Activated naive CD4-positive, alpha-beta T cell treated with anti-CD3 and anti-CD28 coated beads, Interleukin-2, amount 10 ng/mL, durations not matched to agents 7 days and 5 days (primary cell): ENCODE measurements at regions of chr9 and their contacts with region 1.

Region 1: GRCh38 chr9:69056191-69056815 is 20.8 kb downstream of the FXN start:
- DNase-seq: no peak
- H3K4me3 Mint-ChIP-seq: no peak overlapping the region
- H3K27ac Mint-ChIP-seq: no peak overlapping the region
- H3K4me1 Mint-ChIP-seq: peaks cover 19% of the 10 kb centered on the region
- H3K27me3 Mint-ChIP-seq: no peaks in the 10 kb centered on the region

Region 2: GRCh38 chr9:69044240-69045219 is 11.8 kb before region 1 on chr9:
- CTCF ChIA-PET with region 1: interaction called, 15 read pairs
- DNase-seq: peak; percentile 25
- H3K4me3 Mint-ChIP-seq: no peak overlapping the region
- H3K27ac Mint-ChIP-seq: peak overlapping the region; percentile 66
- H3K4me1 Mint-ChIP-seq: peaks cover 22% of the 10 kb centered on the region
- H3K27me3 Mint-ChIP-seq: no peaks in the 10 kb centered on the region

Region 3: GRCh38 chr9:69078581-69078980 is 22.3 kb after region 1 on chr9:
- CTCF ChIA-PET with region 1: no interaction called
- DNase-seq: no peak
- H3K4me3 Mint-ChIP-seq: no peak overlapping the region
- H3K27ac Mint-ChIP-seq: no peak overlapping the region
- H3K4me1 Mint-ChIP-seq: no peaks in the 10 kb centered on the region
- H3K27me3 Mint-ChIP-seq: no peaks in the 10 kb centered on the region

Region 4: DNA sequence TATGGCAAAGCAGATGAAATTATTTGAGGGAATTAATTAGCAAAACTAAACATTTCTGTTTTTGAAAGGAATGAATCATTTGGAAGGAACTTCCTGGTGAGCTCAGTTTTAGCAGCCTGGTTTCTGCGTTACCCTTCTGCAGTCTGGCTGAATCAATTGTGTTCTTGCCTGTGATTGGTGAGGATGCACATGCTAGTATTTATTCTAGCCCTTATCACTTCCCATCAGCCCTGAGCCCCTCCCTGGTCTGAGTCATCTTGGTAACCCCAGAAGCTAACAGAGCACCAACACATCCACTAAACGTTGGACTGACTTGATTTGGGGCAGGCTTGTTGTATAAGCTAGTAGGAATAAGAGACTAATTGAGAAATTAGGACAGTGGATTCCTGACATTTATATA is 124.4 kb after region 1 on chr9:
- CTCF ChIA-PET with region 1: interaction called, 10 read pairs
- DNase-seq: peak; percentile 60
- H3K4me3 Mint-ChIP-seq: no peak overlapping the region
- H3K27ac Mint-ChIP-seq: peak overlapping the region; percentile 76
- H3K4me1 Mint-ChIP-seq: peaks cover 53% of the 10 kb centered on the region
- H3K27me3 Mint-ChIP-seq: no peaks in the 10 kb centered on the region

Region 5: DNA sequence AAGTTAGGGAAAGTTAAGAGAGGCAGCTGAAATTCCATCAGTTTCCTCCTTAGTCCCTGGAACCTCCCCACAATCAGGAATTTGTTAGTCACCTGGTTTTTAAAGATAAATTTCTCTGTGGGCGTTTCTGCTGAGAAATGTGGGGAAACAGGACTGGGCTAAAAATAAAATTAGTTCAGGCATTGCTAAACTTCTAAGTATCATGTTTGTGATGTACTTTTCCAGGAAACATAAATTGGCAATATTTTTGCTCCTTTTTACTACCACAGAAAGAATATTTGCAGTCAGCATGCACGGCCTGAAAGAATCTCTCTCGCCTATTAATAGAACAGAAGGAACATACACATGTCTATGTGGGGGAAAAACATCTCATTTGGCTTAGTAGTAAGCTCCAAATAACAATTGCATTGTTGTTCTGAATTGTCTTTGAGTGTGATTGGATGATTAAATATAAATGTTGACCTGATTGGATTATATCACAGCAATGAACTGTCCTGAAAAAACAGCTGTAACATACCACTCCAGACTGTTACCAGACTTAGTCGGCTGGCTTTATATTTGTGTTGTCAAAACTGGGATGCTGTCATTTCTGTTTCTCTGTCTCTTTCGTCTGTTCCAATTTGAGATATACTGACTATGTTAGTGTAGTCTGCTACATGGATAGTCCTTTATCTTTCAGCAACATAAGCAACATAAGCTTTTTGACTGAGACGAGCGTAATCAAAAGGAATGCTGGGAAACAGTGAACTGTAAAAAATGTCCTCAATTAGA is 130.7 kb after region 1 on chr9:
- CTCF ChIA-PET with region 1: interaction called, 192 read pairs
- DNase-seq: no peak
- H3K4me3 Mint-ChIP-seq: no peak overlapping the region
- H3K27ac Mint-ChIP-seq: peak overlapping the region; percentile 3
- H3K4me1 Mint-ChIP-seq: peaks cover 34% of the 10 kb centered on the region
- H3K27me3 Mint-ChIP-seq: no peaks in the 10 kb centered on the region

Region 6: DNA sequence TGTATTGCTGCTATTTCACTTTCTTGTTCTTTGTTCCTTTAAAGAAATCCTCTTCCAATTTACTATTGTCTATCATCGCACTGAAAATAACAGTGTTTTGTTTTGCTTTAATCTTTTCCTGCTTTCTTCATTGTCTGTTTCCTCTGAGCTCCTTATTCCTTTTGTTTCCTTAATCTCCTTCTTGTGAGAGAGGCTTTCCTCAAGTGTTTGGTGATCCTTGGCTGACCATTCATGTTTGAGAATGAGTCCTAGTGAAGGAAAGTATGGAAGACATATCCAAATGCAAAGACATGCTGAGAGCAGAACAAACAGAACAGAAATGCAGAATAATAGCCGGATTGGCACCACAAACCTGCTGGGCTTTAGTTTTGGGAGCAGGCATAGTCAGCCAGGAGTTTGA is 226.7 kb after region 1 on chr9:
- CTCF ChIA-PET with region 1: no interaction called
- DNase-seq: no peak
- H3K4me3 Mint-ChIP-seq: no peak overlapping the region
- H3K27ac Mint-ChIP-seq: no peak overlapping the region
- H3K4me1 Mint-ChIP-seq: no peaks in the 10 kb centered on the region
- H3K27me3 Mint-ChIP-seq: no peaks in the 10 kb centered on the region